ENCODE measurements at regions of chr17 and their contacts with region 1.

Region 1: DNA sequence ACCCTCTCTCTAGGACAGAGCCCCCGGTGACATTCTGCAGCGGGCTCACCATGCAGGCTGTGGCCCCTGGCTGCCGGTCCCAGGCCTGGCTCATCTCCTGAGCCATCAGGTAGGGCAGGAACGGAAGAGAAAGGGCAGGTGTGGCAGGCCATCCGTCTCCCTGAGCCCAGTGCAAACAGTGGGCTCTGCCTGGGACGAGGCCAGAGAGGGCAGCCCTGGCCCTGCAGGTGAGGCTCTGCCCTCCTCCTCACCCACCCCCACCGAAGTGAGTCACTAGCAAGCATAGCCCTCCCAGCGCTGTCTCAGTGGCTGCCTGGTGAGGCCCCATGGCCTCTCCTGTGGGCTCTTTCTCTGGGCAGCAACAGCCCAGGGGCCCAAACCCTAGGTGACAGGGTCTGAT is 14.5 kb downstream of the OTOP3 start:
- DNase-seq: no peak
- ATAC-seq: peak; percentile 46
- H3K4me3 ChIP-seq: no peak overlapping the region
- H3K27ac ChIP-seq: no peak overlapping the region
- H3K4me1 ChIP-seq: peaks cover 10% of the 10 kb centered on the region
- H3K27me3 ChIP-seq: peaks cover 15 to 65% of the 10 kb centered on the region in 2 experiments
- CTCF ChIP-seq: no peak
- EP300 ChIP-seq: no peak
- POLR2A ChIP-seq: no peak
- RAD21 ChIP-seq: no peak

Region 2: DNA sequence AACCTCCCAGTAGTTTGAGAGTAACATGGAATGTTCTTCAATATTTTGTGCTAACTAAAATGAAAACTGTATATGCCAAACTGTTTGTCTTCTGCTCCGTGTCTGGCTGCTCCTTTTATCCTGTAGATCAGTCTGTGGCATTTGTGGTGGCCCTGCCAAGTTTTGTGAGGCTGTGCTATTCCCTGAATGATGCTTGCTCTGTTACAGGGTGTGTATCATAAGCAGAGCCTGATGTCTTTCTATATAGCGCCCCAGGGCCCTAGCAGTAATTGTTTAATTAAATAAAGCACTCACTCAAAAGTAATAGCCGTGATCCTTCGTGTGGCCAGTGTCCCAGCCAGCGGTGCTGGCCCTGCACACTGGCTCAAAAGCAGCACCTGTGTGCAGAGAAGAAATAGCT is 146.2 kb before region 1 on chr17:
- CTCF ChIA-PET with region 1: no interaction called
- POLR2A ChIA-PET with region 1: no interaction called
- in situ Hi-C with region 1: loop called (anchors 5 kb)
- intact Hi-C with region 1: no loop called
- DNase-seq: no peak
- ATAC-seq: no peak
- H3K4me3 ChIP-seq: no peak overlapping the region
- H3K27ac ChIP-seq: no peak overlapping the region
- H3K4me1 ChIP-seq: peaks cover 11% of the 10 kb centered on the region
- H3K27me3 ChIP-seq: no peaks in the 10 kb centered on the region
- CTCF ChIP-seq: no peak
- EP300 ChIP-seq: no peak
- POLR2A ChIP-seq: no peak
- RAD21 ChIP-seq: no peak

Region 3: DNA sequence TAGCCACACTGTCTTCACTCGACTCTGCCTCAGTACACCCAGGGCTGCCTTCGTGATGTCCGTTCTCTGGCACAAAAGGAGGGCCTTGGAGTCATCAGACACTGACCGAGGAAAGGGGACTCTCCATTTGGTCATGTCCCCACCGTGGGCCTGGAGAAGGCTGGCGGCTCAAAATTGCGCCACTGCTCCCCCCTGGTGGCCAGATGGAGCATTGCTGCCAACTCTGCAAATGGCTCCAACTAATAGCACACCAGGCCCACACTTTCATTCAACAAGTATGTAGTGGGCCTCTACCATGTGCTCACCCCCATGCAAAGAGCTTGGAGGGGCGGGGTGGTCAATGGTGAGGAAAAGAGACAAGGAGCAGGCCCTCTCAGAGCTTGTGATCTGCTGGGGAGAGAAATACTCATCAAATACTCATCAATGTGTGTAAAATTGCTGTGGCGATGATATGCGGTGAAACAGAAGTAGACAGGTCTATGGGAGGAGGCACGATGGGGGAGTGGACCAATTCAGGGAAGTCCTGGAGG is 85.3 kb before region 1 on chr17:
- CTCF ChIA-PET with region 1: no interaction called
- POLR2A ChIA-PET with region 1: no interaction called
- in situ Hi-C with region 1: no loop called
- intact Hi-C with region 1: no loop called
- DNase-seq: peak; percentile 56
- ATAC-seq: peak; percentile 56
- H3K4me3 ChIP-seq: no peak overlapping the region
- H3K27ac ChIP-seq: no peak overlapping the region
- H3K4me1 ChIP-seq: peaks cover 58% of the 10 kb centered on the region
- H3K27me3 ChIP-seq: peaks cover 2 to 13% of the 10 kb centered on the region in 2 experiments; a peak in 3 of 5 replicates
- CTCF ChIP-seq: peak; percentile 98
- EP300 ChIP-seq: no peak
- POLR2A ChIP-seq: no peak
- RAD21 ChIP-seq: peak; percentile 81

Measured in HepG2 (cell line).